IMR-90 (cell line): ENCODE measurements at regions of chr9 and their contacts with region 1.

Region 1: DNA sequence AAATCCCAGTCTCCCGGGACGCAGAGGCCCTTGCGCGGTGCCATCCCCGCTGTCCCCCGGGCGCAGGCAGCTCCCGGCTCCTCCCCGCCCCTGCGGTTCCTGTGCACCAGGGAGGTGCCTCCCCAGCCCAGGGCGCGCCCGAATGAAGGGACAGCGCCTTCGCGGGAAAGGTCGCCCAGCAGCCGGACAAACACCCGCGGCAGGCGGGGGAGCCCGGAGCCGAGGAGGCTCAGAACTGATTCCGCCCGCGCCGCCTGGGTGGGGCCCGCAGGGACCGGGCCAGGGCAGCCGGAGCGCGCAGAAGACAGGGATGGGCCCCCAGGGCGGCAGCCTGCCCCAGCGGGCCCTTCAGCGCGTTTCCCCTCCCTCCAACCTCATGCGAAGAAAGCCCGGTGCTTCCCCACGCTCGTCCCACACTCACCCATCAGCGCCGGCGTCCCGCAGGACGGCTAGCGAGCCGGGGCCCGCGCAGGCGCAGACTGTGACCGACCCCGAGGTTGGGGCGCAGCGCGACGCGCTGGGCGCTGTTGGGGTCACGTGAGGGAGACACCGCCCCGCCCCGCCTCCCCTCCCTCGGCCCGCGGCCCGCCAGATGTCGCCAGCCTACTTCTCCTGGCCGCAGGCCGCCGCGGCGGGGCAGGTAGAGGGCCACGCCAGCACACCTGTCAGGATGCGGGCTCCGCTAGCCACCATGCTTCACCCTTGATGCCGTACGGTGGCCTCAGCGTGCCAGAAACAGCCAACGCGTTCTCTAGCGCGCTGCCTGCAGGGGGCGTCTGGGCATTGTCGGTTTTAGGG is at the start of gene SLC25A51:
- DNase-seq: peak; percentile 88
- ATAC-seq: peak; percentile 85
- H3K4me3 ChIP-seq: peak within 1 kb of the TSS; percentile 78
- H3K27ac ChIP-seq: peak within 1 kb of the TSS; percentile 79
- H3K4me1 ChIP-seq: peaks cover 12% of the 10 kb centered on the region
- H3K27me3 ChIP-seq: no peaks in the 10 kb centered on the region
- CTCF ChIP-seq: peak; percentile 98
- POLR2A ChIP-seq: no peak; the same call in 1 of the 2 replicates
- RAD21 ChIP-seq: peak; percentile 72
- total RNA-seq, gene SLC25A51: 63.0 and 81.6 TPM in 2 replicates

Region 2: GRCh38 chr9:37309136-37309535 is 594.7 kb before region 1 on chr9:
- CTCF ChIA-PET with region 1: no interaction called
- POLR2A ChIA-PET with region 1: no interaction called
- dilution Hi-C with region 1: no loop called
- in situ Hi-C with region 1: no loop called
- intact Hi-C with region 1: no loop called
- DNase-seq: peak; percentile 37
- ATAC-seq: peak; percentile 76
- H3K4me3 ChIP-seq: no peak overlapping the region
- H3K27ac ChIP-seq: no peak overlapping the region
- H3K4me1 ChIP-seq: peaks cover 6% of the 10 kb centered on the region
- H3K27me3 ChIP-seq: no peaks in the 10 kb centered on the region
- CTCF ChIP-seq: peak; percentile 40
- POLR2A ChIP-seq: no peak
- RAD21 ChIP-seq: peak; percentile 56

Region 3: GRCh38 chr9:37582548-37583157 is 321.2 kb before region 1 on chr9:
- CTCF ChIA-PET with region 1: no interaction called
- POLR2A ChIA-PET with region 1: no interaction called
- dilution Hi-C with region 1: no loop called
- in situ Hi-C with region 1: loop called (anchors 10 kb)
- intact Hi-C with region 1: no loop called
- DNase-seq: peak; percentile 86
- ATAC-seq: peak; percentile 93
- H3K4me3 ChIP-seq: no peak overlapping the region
- H3K27ac ChIP-seq: no peak overlapping the region
- H3K4me1 ChIP-seq: no peaks in the 10 kb centered on the region
- H3K27me3 ChIP-seq: no peaks in the 10 kb centered on the region
- CTCF ChIP-seq: peak; percentile 75
- POLR2A ChIP-seq: no peak
- RAD21 ChIP-seq: peak; percentile 70

Region 4: DNA sequence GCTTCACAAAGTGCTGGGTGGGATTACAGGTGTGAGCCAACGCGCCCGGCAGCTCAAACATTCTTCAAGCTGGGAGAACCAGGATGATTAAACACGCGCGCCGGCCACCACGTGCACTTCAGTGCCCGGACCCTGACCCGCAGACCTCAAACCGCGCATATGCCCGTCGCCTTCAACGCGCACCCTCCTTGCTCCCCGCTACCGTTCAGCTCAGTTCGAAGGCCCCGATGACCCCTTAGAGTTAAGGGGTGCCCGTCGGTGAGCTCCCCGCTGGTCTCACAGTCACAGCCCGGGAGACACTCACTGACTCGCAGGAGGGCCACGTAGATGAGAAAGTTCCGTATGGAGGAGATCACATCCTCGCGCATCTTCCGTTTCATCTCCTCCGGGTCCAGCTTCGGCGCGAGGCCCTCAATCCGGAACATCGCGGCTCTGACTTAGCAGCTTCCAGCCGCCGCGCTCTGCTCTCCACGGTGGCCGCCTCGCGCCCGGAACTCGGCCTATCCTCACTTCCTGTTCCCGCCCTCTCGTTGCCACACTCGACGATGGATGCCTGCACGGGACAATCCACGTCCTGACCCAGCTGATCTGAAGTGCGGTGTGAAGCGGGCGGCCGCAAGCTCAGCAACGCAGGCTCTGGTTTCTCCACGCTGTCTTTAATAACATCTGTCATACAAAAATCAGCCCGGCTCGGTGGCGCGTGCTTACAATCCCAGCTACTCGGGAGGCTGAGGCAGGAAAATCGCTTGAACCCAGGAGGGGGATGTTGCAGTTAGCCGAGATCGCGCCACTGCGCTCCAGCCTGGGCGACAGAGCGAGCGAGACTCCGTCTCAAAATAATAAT is 311.5 kb before region 1 on chr9 and contains the start of gene TOMM5:
- CTCF ChIA-PET with region 1: no interaction called
- POLR2A ChIA-PET with region 1: no interaction called
- dilution Hi-C with region 1: no loop called
- in situ Hi-C with region 1: loop called (anchors 10 kb)
- intact Hi-C with region 1: loop called (anchors 5 kb)
- DNase-seq: peak; percentile 94
- ATAC-seq: peak; percentile 94
- H3K4me3 ChIP-seq: peak within 1 kb of the TSS; percentile 82
- H3K27ac ChIP-seq: peak within 1 kb of the TSS; percentile 91
- H3K4me1 ChIP-seq: peaks cover 3% of the 10 kb centered on the region; the same call in 1 of the 2 replicates
- H3K27me3 ChIP-seq: no peaks in the 10 kb centered on the region
- CTCF ChIP-seq: no peak
- POLR2A ChIP-seq: peak; percentile 92
- RAD21 ChIP-seq: no peak
- total RNA-seq, gene TOMM5: 159 and 229 TPM in 2 replicates

Region 5: GRCh38 chr9:37852222-37852621 is 51.6 kb before region 1 on chr9:
- CTCF ChIA-PET with region 1: no interaction called
- POLR2A ChIA-PET with region 1: no interaction called
- dilution Hi-C with region 1: no loop called
- in situ Hi-C with region 1: no loop called
- intact Hi-C with region 1: no loop called
- DNase-seq: no peak
- ATAC-seq: no peak
- H3K4me3 ChIP-seq: no peak overlapping the region
- H3K27ac ChIP-seq: no peak overlapping the region
- H3K4me1 ChIP-seq: no peaks in the 10 kb centered on the region
- H3K27me3 ChIP-seq: no peaks in the 10 kb centered on the region
- CTCF ChIP-seq: no peak
- POLR2A ChIP-seq: no peak
- RAD21 ChIP-seq: no peak

Region 6: GRCh38 chr9:37870799-37871176 is 33.1 kb before region 1 on chr9:
- CTCF ChIA-PET with region 1: no interaction called
- POLR2A ChIA-PET with region 1: no interaction called
- dilution Hi-C with region 1: no loop called
- in situ Hi-C with region 1: no loop called
- intact Hi-C with region 1: no loop called
- DNase-seq: no peak
- ATAC-seq: no peak
- H3K4me3 ChIP-seq: no peak overlapping the region
- H3K27ac ChIP-seq: no peak overlapping the region
- H3K4me1 ChIP-seq: no peaks in the 10 kb centered on the region; the same call in 1 of the 2 replicates
- H3K27me3 ChIP-seq: no peaks in the 10 kb centered on the region
- CTCF ChIP-seq: no peak
- POLR2A ChIP-seq: no peak
- RAD21 ChIP-seq: no peak

Region 7: GRCh38 chr9:38392235-38393127 is 488.6 kb after region 1 on chr9 and contains the start of gene ALDH1B1:
- CTCF ChIA-PET with region 1: no interaction called
- POLR2A ChIA-PET with region 1: no interaction called
- dilution Hi-C with region 1: loop called (anchors 25 kb)
- in situ Hi-C with region 1: no loop called
- intact Hi-C with region 1: no loop called
- DNase-seq: peak; percentile 82
- ATAC-seq: peak; percentile 99
- H3K4me3 ChIP-seq: peak within 1 kb of the TSS; percentile 83
- H3K27ac ChIP-seq: peak within 1 kb of the TSS; percentile 57
- H3K4me1 ChIP-seq: peaks cover 11% of the 10 kb centered on the region
- H3K27me3 ChIP-seq: no peaks in the 10 kb centered on the region
- CTCF ChIP-seq: peak; percentile 21; the same call in 1 of the 2 replicates
- POLR2A ChIP-seq: peak; percentile 60; the same call in 1 of the 2 replicates
- RAD21 ChIP-seq: no peak
- total RNA-seq, gene ALDH1B1: 37.2 and 37.6 TPM in 2 replicates